Colonic mucosa (tissue), 4 donors: ENCODE measurements at regions of chrX and their contacts with region 1.

Region 1: GRCh38 chrX:132292793-132293192 is 73.5 kb upstream of the RAP2C start:
- DNase-seq: peak; percentile 24
- H3K4me3 ChIP-seq: no peak overlapping the region
- H3K27ac ChIP-seq: no peak overlapping the region
- H3K4me1 ChIP-seq: no peaks in the 10 kb centered on the region
- H3K27me3 ChIP-seq: no peaks in the 10 kb centered on the region
- CTCF ChIP-seq: peak; percentile 63

Region 2: GRCh38 chrX:132518401-132518800 is 225.6 kb after region 1 on chrX:
- intact Hi-C with region 1: loop called (anchors 10 kb)
- DNase-seq: no peak
- H3K4me3 ChIP-seq: no peak overlapping the region
- H3K27ac ChIP-seq: no peak overlapping the region
- H3K4me1 ChIP-seq: no peaks in the 10 kb centered on the region
- H3K27me3 ChIP-seq: peaks cover 5% of the 10 kb centered on the region
- CTCF ChIP-seq: no peak